ENCODE measurements at regions of chr12 and their contacts with region 1.

Region 1: GRCh38 chr12:102061560-102062418 is at the start of gene WASHC3:
- DNase-seq: peak; percentile 87 to 98
- H3K4me3 ChIP-seq: peak within 1 kb of the TSS; percentile 74 to 95
- H3K27ac ChIP-seq: peak within 1 kb of the TSS; percentile 89 to 92
- H3K4me1 ChIP-seq: no peaks in the 10 kb centered on the region
- H3K27me3 ChIP-seq: no peaks in the 10 kb centered on the region
- CTCF ChIP-seq: no peak
- total RNA-seq, gene WASHC3: 36.4 TPM

Region 2: GRCh38 chr12:101407436-101408345 is 654.1 kb before region 1 on chr12 and contains the start of gene ARL1:
- intact Hi-C with region 1: loop called (anchors 5 kb)
- DNase-seq: peak; percentile 29 to 89
- H3K4me3 ChIP-seq: peak within 1 kb of the TSS; percentile 89 to 92
- H3K27ac ChIP-seq: peak within 1 kb of the TSS; percentile 89 to 94
- H3K4me1 ChIP-seq: peaks cover 0 to 3% of the 10 kb centered on the region in 2 donors
- H3K27me3 ChIP-seq: no peaks in the 10 kb centered on the region
- CTCF ChIP-seq: no peak
- total RNA-seq, gene ARL1: 16.0 TPM

Region 3: GRCh38 chr12:102033991-102034745 is 27.6 kb before region 1 on chr12:
- intact Hi-C with region 1: no loop called
- DNase-seq: no peak
- H3K4me3 ChIP-seq: no peak overlapping the region
- H3K27ac ChIP-seq: no peak overlapping the region
- H3K4me1 ChIP-seq: peaks cover 0 to under 1% of the 10 kb centered on the region in 2 donors
- H3K27me3 ChIP-seq: no peaks in the 10 kb centered on the region
- CTCF ChIP-seq: no peak

Region 4: DNA sequence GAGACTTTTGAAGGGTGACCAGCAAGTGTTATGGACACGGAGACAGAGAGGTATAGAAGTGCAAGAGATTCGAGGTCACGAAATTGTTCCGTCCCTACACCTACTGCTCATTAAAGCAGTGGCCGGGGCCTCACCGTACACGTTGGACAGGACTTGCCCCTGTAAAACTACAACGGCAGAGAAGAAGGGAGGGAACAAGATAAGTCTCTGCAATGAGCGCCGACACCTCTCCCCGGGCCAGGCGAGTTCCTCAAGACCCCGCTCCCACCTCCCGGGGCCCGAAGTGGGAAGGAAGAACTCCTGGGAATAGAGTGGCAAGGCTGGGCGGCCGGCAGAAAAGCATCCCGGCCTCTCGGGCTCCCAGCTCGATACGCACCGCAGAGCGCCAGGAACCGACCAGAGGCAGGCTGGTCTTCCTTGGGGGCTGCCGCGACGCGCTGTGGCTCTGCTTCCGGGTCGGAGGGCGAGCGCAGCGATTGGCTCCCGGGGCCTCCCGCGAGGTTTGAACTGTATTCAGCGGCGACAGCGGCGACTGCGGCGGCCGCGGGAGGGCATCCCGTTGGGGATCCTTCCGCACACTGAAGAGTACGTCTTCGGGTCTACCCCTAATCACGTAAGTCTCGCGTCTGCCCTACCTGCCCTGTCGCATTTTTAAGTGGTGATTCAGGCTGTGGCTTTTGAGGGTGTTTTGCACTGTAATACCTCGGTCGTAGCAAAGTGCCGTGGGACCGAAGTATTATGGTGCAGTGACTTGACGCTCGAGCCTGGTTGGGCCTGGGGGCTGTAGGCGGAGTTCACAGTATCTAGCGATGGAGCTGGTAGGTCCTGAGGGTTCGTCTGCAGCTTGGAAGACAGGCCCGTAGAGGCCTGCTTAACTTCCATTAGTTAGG is 58.1 kb after region 1 on chr12 and contains the starts of genes NUP37 and PARPBP:
- intact Hi-C with region 1: loop called (anchors 1 kb)
- DNase-seq: peak; percentile 43 to 93
- H3K4me3 ChIP-seq: peak within 1 kb of the TSS; percentile 65 to 67
- H3K27ac ChIP-seq: peak within 1 kb of the TSS; percentile 65 to 77
- H3K4me1 ChIP-seq: peaks cover 0 to 13% of the 10 kb centered on the region in 2 donors
- H3K27me3 ChIP-seq: no peaks in the 10 kb centered on the region
- CTCF ChIP-seq: no peak
- total RNA-seq, gene NUP37: 66.9 TPM
- total RNA-seq, gene PARPBP: 0.64 TPM